ENCODE measurements at regions of chr3 and their contacts with region 1.

Region 1: GRCh38 chr3:137013955-137014688 is 56.3 kb downstream of the IL20RB start:
- DNase-seq: peak; percentile 88 to 92 (median 90)
- ATAC-seq: peak; percentile 93 to 98 (median 96)
- H3K4me3 ChIP-seq: peak overlapping the region in 11 of 12 donors; percentile 21 to 62 (median 55)
- H3K27ac ChIP-seq: peak overlapping the region in 10 of 12 donors; percentile 0 to 87 (median 56)
- H3K4me1 ChIP-seq: peaks cover 0 to 18% (median 6%) of the 10 kb centered on the region in 12 donors
- H3K27me3 ChIP-seq: no peaks in the 10 kb centered on the region
- CTCF ChIP-seq: peak; percentile 82 to 95 (median 91)
- POLR2A ChIP-seq: no peak

Region 2: GRCh38 chr3:136390574-136390973 is 623.5 kb before region 1 on chr3:
- intact Hi-C with region 1: loop called in 9 of 10 experiments (anchors 2 to 10 kb)
- DNase-seq: no peak
- ATAC-seq: peak in 2 of 4 donors; percentile 63 to 64
- H3K4me3 ChIP-seq: no peak overlapping the region
- H3K27ac ChIP-seq: peak overlapping the region in 1 of 12 donors; percentile 17
- H3K4me1 ChIP-seq: peaks cover 0 to 9% (median 0%) of the 10 kb centered on the region in 12 donors
- H3K27me3 ChIP-seq: no peaks in the 10 kb centered on the region
- CTCF ChIP-seq: no peak
- POLR2A ChIP-seq: no peak

Region 3: GRCh38 chr3:136545664-136546268 is 468.4 kb before region 1 on chr3:
- intact Hi-C with region 1: loop called in 1 of 10 experiments (anchors 10 kb)
- DNase-seq: no peak
- ATAC-seq: no peak
- H3K4me3 ChIP-seq: no peak overlapping the region
- H3K27ac ChIP-seq: no peak overlapping the region
- H3K4me1 ChIP-seq: peaks cover 0 to 13% (median 0%) of the 10 kb centered on the region in 12 donors
- H3K27me3 ChIP-seq: no peaks in the 10 kb centered on the region
- CTCF ChIP-seq: peak in 8 of 12 donors; percentile 14 to 44 (median 30)
- POLR2A ChIP-seq: no peak

Region 4: DNA sequence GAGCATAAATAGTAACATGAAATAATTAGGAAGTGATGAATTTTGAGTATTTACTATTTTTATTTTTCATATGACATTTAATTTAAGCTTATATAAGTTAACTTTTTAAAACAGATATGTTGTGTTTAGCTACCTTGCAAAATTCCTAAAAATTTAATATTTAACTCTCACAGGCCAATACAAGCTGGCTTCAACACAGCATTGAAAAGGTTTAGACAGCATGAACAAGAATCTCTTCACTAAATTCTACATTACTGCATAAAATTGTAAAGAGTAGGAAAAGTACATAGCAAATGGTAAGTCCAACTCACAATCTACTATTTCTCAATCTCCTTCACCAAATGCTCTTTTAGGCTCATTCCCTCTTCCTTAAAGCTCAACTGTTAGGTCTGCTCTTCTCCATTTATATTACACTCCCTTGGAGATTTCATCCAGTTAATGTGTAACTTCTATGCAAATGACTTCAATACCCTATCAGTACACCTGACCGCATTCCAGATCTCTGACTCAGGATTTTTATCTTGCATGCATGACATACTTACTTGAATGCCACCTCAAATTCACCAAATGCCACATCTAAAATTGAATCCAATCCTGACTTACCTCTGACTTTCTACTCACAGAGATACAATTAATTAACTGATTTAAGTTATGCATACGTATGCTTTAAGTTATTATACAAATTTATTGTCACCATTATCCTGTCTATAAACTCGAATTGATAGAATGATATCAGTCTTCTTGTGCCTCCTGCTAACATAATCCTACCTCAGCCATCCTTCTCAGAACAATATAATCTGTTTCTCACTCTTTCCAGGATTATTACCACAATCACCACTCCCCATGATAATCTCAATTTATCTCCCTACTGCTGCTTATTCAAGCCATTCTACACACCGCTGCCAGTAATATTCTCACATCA is 389.0 kb before region 1 on chr3:
- intact Hi-C with region 1: no loop called
- DNase-seq: no peak
- ATAC-seq: no peak
- H3K4me3 ChIP-seq: no peak overlapping the region
- H3K27ac ChIP-seq: no peak overlapping the region
- H3K4me1 ChIP-seq: peaks cover 0 to 40% (median 10%) of the 10 kb centered on the region in 12 donors
- H3K27me3 ChIP-seq: no peaks in the 10 kb centered on the region
- CTCF ChIP-seq: no peak
- POLR2A ChIP-seq: no peak

Region 5: DNA sequence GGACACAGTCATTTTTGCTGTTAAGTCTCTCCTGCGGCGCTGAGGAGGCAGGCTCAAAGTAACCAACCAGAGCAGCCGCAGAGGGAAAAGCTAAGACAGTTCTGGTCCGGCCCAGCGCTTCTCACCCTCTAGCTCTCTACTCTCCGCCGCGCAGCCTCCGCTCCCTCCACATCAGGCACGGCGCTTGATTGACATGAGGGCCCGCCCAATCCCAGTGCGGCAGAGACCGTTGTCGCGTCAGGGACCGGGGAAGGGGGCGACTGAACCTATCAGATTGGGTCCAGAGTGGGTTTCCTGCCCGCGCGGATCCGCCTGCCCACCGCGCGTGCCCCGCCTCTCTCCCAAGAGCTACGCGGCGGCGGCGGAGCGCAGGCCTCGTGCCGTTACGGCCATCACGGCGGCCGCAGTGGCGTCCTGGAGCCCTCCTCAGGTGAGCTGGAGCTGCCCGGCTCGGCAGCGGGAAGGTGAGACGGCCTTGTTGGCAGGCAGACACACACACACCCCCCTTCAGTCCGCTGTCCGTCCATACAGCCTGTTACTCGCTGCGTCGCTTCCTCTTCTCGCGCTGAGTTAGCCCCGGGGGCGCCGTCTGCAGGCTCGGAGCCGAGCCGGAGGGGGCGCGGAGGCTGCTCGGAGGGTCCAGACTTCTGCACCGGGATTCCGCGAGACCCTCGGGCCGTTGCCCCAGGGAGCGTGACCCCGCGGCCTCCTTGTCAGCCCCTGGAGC is 152.1 kb before region 1 on chr3 and contains the start of gene NCK1:
- intact Hi-C with region 1: loop called in 4 of 10 experiments (anchors 1 to 10 kb)
- DNase-seq: peak; percentile 99
- ATAC-seq: peak; percentile 99 to 100 (median 99)
- H3K4me3 ChIP-seq: peak within 1 kb of the TSS; percentile 61 to 95 (median 83)
- H3K27ac ChIP-seq: peak within 1 kb of the TSS; percentile 72 to 95 (median 90)
- H3K4me1 ChIP-seq: peaks cover 0 to 51% (median 23%) of the 10 kb centered on the region in 12 donors
- H3K27me3 ChIP-seq: no peaks in the 10 kb centered on the region
- CTCF ChIP-seq: peak in 5 of 12 donors; percentile 6 to 26 (median 17)
- POLR2A ChIP-seq: peak; percentile 19 to 92
- total RNA-seq, gene NCK1: 18.7 to 36.0 (median 23.4) TPM

Region 6: GRCh38 chr3:136955813-136956212 is 58.3 kb before region 1 on chr3:
- intact Hi-C with region 1: loop called in 3 of 10 experiments (anchors 5 to 10 kb)
- DNase-seq: no peak
- ATAC-seq: no peak
- H3K4me3 ChIP-seq: no peak overlapping the region
- H3K27ac ChIP-seq: no peak overlapping the region
- H3K4me1 ChIP-seq: peaks cover 0 to 9% (median 0%) of the 10 kb centered on the region in 12 donors
- H3K27me3 ChIP-seq: no peaks in the 10 kb centered on the region
- CTCF ChIP-seq: no peak
- POLR2A ChIP-seq: no peak

Region 7: GRCh38 chr3:137150825-137151224 is 136.7 kb after region 1 on chr3:
- intact Hi-C with region 1: no loop called
- DNase-seq: no peak
- ATAC-seq: no peak
- H3K4me3 ChIP-seq: no peak overlapping the region
- H3K27ac ChIP-seq: no peak overlapping the region
- H3K4me1 ChIP-seq: no peaks in the 10 kb centered on the region
- H3K27me3 ChIP-seq: no peaks in the 10 kb centered on the region
- CTCF ChIP-seq: no peak
- POLR2A ChIP-seq: no peak